ENCODE measurements at regions of chr2 and their contacts with region 1.

Region 1: GRCh38 chr2:241877989-241878970 is 8.8 kb downstream of the RTP5 start:
- DNase-seq: peak; percentile 88
- ATAC-seq: peak; percentile 21
- H3K4me3 Mint-ChIP-seq: no peak overlapping the region
- H3K27ac Mint-ChIP-seq: no peak overlapping the region
- H3K4me1 Mint-ChIP-seq: peaks cover 26% of the 10 kb centered on the region
- H3K27me3 Mint-ChIP-seq: no peaks in the 10 kb centered on the region

Region 2: GRCh38 chr2:240566203-240567136 is 1311.8 kb before region 1 on chr2:
- CTCF ChIA-PET with region 1: no interaction called
- POLR2A ChIA-PET with region 1: no interaction called
- intact Hi-C with region 1: loop called (anchors 1 to 10 kb)
- DNase-seq: peak; percentile 98
- ATAC-seq: peak; percentile 67
- H3K4me3 Mint-ChIP-seq: peak overlapping the region; percentile 87
- H3K27ac Mint-ChIP-seq: peak overlapping the region; percentile 98
- H3K4me1 Mint-ChIP-seq: peaks cover 65% of the 10 kb centered on the region
- H3K27me3 Mint-ChIP-seq: no peaks in the 10 kb centered on the region

Region 3: GRCh38 chr2:241217320-241218031 is 660.8 kb before region 1 on chr2:
- CTCF ChIA-PET with region 1: no interaction called
- POLR2A ChIA-PET with region 1: no interaction called
- intact Hi-C with region 1: loop called in 1 of 2 experiments (anchors 10 kb)
- DNase-seq: peak; percentile 60
- ATAC-seq: peak; percentile 37
- H3K4me3 Mint-ChIP-seq: peak overlapping the region; percentile 56
- H3K27ac Mint-ChIP-seq: no peak overlapping the region
- H3K4me1 Mint-ChIP-seq: peaks cover 9% of the 10 kb centered on the region
- H3K27me3 Mint-ChIP-seq: peaks cover 2% of the 10 kb centered on the region

Region 4: GRCh38 chr2:241637000-241637791 is 241.1 kb before region 1 on chr2 and contains the starts of genes ATG4B and THAP4:
- CTCF ChIA-PET with region 1: no interaction called
- POLR2A ChIA-PET with region 1: no interaction called
- intact Hi-C with region 1: loop called (anchors 1 to 2 kb)
- DNase-seq: peak; percentile 90
- ATAC-seq: peak; percentile 69
- H3K4me3 Mint-ChIP-seq: peak within 1 kb of the TSS; percentile 84
- H3K27ac Mint-ChIP-seq: peak within 1 kb of the TSS; percentile 96
- H3K4me1 Mint-ChIP-seq: peaks cover 50% of the 10 kb centered on the region
- H3K27me3 Mint-ChIP-seq: no peaks in the 10 kb centered on the region
- total RNA-seq, gene ATG4B: 71.8 to 80.1 TPM
- total RNA-seq, gene THAP4: 42.5 to 54.1 TPM

Region 5: DNA sequence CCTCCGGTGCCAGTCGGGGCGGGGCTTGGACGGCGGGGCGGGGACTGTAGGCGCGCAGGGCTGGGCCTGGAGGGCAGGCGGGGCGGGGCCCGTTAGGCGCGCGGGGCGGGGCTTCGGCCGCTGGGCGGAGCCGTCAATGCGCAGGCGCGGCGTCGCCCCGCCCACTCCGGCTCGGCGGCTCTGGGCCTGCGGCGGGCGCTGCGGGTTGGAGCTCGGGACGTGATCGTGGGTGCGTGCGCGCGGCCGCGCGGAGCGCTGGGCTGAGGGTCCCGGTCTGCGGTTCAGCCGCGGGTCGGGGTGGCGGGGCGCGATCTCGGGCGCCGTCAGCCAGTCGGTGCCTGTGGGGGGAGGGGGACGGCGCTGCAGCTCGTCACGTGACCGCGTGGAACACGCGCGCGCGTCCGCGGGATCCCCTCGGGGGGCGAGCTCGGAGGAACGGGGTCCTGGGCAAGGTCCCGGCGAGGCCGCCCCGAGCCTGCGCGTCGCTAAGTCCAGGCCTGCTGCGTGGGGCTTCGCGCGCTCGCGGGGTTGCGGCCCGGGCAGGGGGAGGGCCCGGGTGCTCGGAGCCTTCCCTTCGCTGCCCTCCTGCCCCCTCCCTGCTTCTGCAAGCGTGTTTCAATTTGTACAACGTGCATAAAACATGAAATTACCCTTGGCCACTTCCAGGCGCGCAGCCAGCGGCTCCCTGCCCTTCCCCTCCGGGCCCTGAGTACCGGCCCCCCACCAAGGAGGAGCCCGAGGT is 143.6 kb before region 1 on chr2 and contains the start of gene D2HGDH:
- CTCF ChIA-PET with region 1: interaction called, 11 read pairs
- POLR2A ChIA-PET with region 1: no interaction called
- intact Hi-C with region 1: loop called (anchors 1 kb)
- DNase-seq: peak; percentile 98
- ATAC-seq: peak; percentile 92
- H3K4me3 Mint-ChIP-seq: peak within 1 kb of the TSS; percentile 79
- H3K27ac Mint-ChIP-seq: peak within 1 kb of the TSS; percentile 70
- H3K4me1 Mint-ChIP-seq: peaks cover 57% of the 10 kb centered on the region
- H3K27me3 Mint-ChIP-seq: no peaks in the 10 kb centered on the region
- total RNA-seq, gene D2HGDH: 18.2 to 34.1 TPM

Measured in activated CD4-positive, alpha-beta T cell treated with anti-CD3 and anti-CD28 coated beads for 36 hours (primary cell).